ENCODE measurements at regions of chr12 and their contacts with region 1.

Region 1: GRCh38 chr12:55926738-55927587 is 731 bp downstream of the PYM1 start:
- DNase-seq: peak; percentile 77 to 96 (median 88)
- ATAC-seq: peak; percentile 41 to 46
- H3K4me3 Mint-ChIP-seq: peak overlapping the region; percentile 92 to 100 (median 98)
- H3K27ac Mint-ChIP-seq: peak overlapping the region; percentile 95 to 100 (median 98)
- H3K4me1 Mint-ChIP-seq: peaks cover 34 to 67% (median 51%) of the 10 kb centered on the region in 4 donors
- H3K27me3 Mint-ChIP-seq: no peaks in the 10 kb centered on the region

Region 2: DNA sequence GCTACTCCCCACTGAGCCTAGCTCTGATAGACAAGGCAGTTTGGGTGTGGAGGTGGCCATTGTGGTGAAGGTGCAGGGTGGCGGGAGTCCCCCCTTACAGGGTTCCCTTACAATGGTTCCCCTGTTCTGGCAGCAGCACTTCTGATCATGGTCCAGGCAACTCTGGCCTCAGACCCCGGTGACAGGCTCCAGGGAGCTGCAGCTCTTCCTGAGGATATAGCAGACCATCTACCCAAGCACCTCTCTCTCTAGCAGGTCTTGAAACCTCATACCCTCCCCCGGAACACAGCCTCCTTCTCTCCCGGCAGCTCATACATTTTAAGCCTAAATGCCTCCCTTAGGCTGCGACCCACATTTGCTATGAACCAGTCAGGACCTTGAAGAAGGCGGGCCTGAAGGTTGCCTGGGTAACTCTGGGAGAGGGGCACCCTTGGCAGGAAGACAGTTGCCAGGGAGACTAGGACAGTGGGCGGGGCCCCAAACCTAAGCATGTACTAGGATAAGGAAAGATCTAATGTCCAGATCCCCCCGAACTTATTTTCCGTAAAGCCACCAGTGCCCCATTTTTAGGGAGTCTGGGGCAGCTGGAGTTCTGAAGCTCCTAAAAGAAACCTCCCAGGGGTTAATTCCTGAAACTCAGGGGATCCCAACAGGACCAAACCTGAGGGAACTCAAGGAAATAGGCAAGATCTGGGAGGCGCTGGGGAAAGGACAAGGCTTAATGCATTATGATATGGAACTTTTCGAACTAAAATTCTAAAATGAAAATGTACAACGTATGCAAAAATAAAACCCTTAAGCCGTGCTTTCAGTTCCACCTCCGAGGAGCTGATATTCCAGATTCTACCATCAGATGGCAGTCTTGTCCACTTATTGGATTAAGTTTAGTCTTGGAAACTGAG is 188.6 kb before region 1 on chr12:
- POLR2A ChIA-PET with region 1: interaction called, 60 read pairs
- DNase-seq: peak; percentile 48 to 91 (median 80)
- ATAC-seq: peak; percentile 65 to 80
- H3K4me3 Mint-ChIP-seq: peak overlapping the region; percentile 82 to 95 (median 93)
- H3K27ac Mint-ChIP-seq: peak overlapping the region; percentile 77 to 98 (median 95)
- H3K4me1 Mint-ChIP-seq: peaks cover 16 to 32% (median 26%) of the 10 kb centered on the region in 4 donors
- H3K27me3 Mint-ChIP-seq: no peaks in the 10 kb centered on the region

Region 3: GRCh38 chr12:55817346-55818139 is 109.4 kb before region 1 on chr12 and contains the starts of genes ORMDL2 and SARNP:
- POLR2A ChIA-PET with region 1: interaction called, 71 read pairs
- DNase-seq: peak; percentile 85 to 99 (median 98)
- ATAC-seq: peak; percentile 92 to 93
- H3K4me3 Mint-ChIP-seq: peak within 1 kb of the TSS in 1 of 10 donors; percentile 77
- H3K27ac Mint-ChIP-seq: no peak within 1 kb of the TSS
- H3K4me1 Mint-ChIP-seq: peaks cover 10 to 51% (median 41%) of the 10 kb centered on the region in 4 donors
- H3K27me3 Mint-ChIP-seq: no peaks in the 10 kb centered on the region
- polyA plus RNA-seq, gene ORMDL2: 71.6 to 92.5 (median 90.3) TPM
- polyA plus RNA-seq, gene SARNP: 93.6 to 104 (median 94.0) TPM

Region 4: DNA sequence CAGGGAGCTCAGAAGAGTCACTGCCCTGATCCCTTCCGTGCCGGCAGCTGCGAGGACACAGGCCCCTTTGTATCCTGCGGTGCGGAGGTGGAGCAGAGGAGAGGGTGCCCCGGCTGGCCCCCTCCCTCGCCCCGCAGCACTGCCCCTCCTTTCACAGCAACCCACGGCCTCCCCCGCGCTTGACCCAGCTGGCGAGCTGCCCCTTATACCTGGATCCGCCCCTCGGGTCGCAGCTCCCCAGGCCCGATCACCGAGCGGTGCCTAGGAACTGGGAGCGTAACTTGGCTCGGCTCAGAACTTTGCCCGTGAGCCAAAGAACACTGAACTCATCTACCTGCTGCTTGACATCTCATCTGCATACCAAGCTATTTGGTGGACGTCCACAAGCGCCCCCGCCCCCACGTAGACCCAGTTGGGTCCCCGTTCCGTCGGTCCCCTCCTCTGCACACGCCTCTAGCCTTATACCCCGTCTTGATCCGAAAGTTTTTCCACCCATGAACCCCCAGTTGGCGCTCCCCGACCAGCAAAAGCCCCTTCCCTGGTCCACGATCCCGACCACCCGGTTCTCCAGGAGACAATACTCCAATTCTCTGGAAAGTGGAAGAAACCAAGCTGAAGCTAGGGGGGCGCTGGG is 96.9 kb before region 1 on chr12:
- POLR2A ChIA-PET with region 1: interaction called, 217 read pairs
- DNase-seq: peak; percentile 15 to 71 (median 42)
- ATAC-seq: peak; percentile 21 to 36
- H3K4me3 Mint-ChIP-seq: peak overlapping the region; percentile 94 to 99 (median 98)
- H3K27ac Mint-ChIP-seq: peak overlapping the region; percentile 85 to 99 (median 96)
- H3K4me1 Mint-ChIP-seq: peaks cover 37 to 63% (median 59%) of the 10 kb centered on the region in 4 donors
- H3K27me3 Mint-ChIP-seq: no peaks in the 10 kb centered on the region

Region 5: DNA sequence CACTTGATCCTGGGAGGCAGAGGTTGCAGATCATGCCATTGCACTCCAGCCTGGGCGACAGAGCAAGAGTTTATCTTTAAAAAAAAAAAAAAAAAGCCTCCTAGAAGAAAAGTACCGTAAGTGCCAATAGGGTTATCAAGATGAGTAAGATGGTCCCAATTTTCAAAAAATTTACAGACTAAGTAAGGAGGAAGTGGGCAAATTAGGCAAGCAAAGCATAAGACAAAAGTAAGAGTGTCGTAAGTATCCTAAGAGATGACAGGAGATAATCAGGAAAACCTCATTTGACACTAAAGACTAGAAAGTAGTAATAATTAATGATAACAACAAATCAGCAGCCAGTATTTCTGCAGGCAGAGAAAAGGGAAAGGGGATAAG is 11.5 kb before region 1 on chr12:
- POLR2A ChIA-PET with region 1: interaction called, 18 read pairs
- DNase-seq: no peak
- ATAC-seq: no peak
- H3K4me3 Mint-ChIP-seq: peak overlapping the region in 4 of 10 donors; percentile 5 to 40 (median 18)
- H3K27ac Mint-ChIP-seq: peak overlapping the region in 7 of 10 donors; percentile 1 to 88 (median 32)
- H3K4me1 Mint-ChIP-seq: peaks cover 19 to 53% (median 40%) of the 10 kb centered on the region in 4 donors
- H3K27me3 Mint-ChIP-seq: no peaks in the 10 kb centered on the region

Region 6: GRCh38 chr12:55940065-55940732 is 13.2 kb after region 1 on chr12:
- POLR2A ChIA-PET with region 1: interaction called, 293 read pairs
- DNase-seq: peak; percentile 63 to 92 (median 82)
- ATAC-seq: peak; percentile 92
- H3K4me3 Mint-ChIP-seq: peak overlapping the region; percentile 47 to 98 (median 66)
- H3K27ac Mint-ChIP-seq: peak overlapping the region; percentile 79 to 99 (median 95)
- H3K4me1 Mint-ChIP-seq: peaks cover 56 to 97% (median 81%) of the 10 kb centered on the region in 4 donors
- H3K27me3 Mint-ChIP-seq: no peaks in the 10 kb centered on the region

Region 7: GRCh38 chr12:55946553-55946952 is 19.6 kb after region 1 on chr12:
- POLR2A ChIA-PET with region 1: interaction called, 293 read pairs
- DNase-seq: no peak
- ATAC-seq: no peak
- H3K4me3 Mint-ChIP-seq: no peak overlapping the region
- H3K27ac Mint-ChIP-seq: peak overlapping the region; percentile 29 to 96 (median 81)
- H3K4me1 Mint-ChIP-seq: peaks cover 25 to 60% (median 45%) of the 10 kb centered on the region in 4 donors
- H3K27me3 Mint-ChIP-seq: no peaks in the 10 kb centered on the region